Sigmoid colon (tissue), 7 donors: ENCODE measurements at regions of chr10 and their contacts with region 1.

Region 1: GRCh38 chr10:58781873-58782488 is 269.3 kb downstream of the BICC1 start:
- DNase-seq: no peak
- H3K4me3 ChIP-seq: no peak overlapping the region
- H3K27ac ChIP-seq: peak overlapping the region in 1 of 4 donors; percentile 39
- H3K4me1 ChIP-seq: peaks cover 0 to 16% (median 3%) of the 10 kb centered on the region in 4 donors
- H3K27me3 ChIP-seq: no peaks in the 10 kb centered on the region
- CTCF ChIP-seq: peak in 3 of 4 experiments; percentile 37 to 64 (median 48)
- EP300 ChIP-seq: no peak
- POLR2A ChIP-seq: no peak

Region 2: GRCh38 chr10:58414270-58415041 is 367.5 kb before region 1 on chr10:
- intact Hi-C with region 1: loop called (anchors 10 kb)
- DNase-seq: no peak
- H3K4me3 ChIP-seq: no peak overlapping the region
- H3K27ac ChIP-seq: no peak overlapping the region
- H3K4me1 ChIP-seq: peaks cover 0 to 5% (median 0%) of the 10 kb centered on the region in 4 donors
- H3K27me3 ChIP-seq: no peaks in the 10 kb centered on the region
- CTCF ChIP-seq: peak in 1 of 4 experiments; percentile 13
- EP300 ChIP-seq: no peak
- POLR2A ChIP-seq: no peak

Region 3: GRCh38 chr10:58618158-58618676 is 163.8 kb before region 1 on chr10:
- intact Hi-C with region 1: no loop called
- DNase-seq: no peak
- H3K4me3 ChIP-seq: no peak overlapping the region
- H3K27ac ChIP-seq: no peak overlapping the region
- H3K4me1 ChIP-seq: no peaks in the 10 kb centered on the region
- H3K27me3 ChIP-seq: no peaks in the 10 kb centered on the region
- CTCF ChIP-seq: no peak
- EP300 ChIP-seq: no peak
- POLR2A ChIP-seq: no peak